Uterus (tissue), 4 donors: ENCODE measurements at regions of chr9 and their contacts with region 1.

Region 1: GRCh38 chr9:113401027-113401792 is at the start of gene ALAD:
- DNase-seq: peak; percentile 99 to 100
- H3K4me3 ChIP-seq: peak within 1 kb of the TSS; percentile 85 to 88
- H3K27ac ChIP-seq: peak within 1 kb of the TSS; percentile 76
- H3K4me1 ChIP-seq: peaks cover 5 to 6% of the 10 kb centered on the region in 2 donors
- H3K27me3 ChIP-seq: no peaks in the 10 kb centered on the region
- CTCF ChIP-seq: peak; percentile 96 to 98 (median 96)
- POLR2A ChIP-seq: peak in 1 of 2 donors; percentile 60
- total RNA-seq, gene ALAD: 1.5 to 26.6 (median 16.1) TPM

Region 2: DNA sequence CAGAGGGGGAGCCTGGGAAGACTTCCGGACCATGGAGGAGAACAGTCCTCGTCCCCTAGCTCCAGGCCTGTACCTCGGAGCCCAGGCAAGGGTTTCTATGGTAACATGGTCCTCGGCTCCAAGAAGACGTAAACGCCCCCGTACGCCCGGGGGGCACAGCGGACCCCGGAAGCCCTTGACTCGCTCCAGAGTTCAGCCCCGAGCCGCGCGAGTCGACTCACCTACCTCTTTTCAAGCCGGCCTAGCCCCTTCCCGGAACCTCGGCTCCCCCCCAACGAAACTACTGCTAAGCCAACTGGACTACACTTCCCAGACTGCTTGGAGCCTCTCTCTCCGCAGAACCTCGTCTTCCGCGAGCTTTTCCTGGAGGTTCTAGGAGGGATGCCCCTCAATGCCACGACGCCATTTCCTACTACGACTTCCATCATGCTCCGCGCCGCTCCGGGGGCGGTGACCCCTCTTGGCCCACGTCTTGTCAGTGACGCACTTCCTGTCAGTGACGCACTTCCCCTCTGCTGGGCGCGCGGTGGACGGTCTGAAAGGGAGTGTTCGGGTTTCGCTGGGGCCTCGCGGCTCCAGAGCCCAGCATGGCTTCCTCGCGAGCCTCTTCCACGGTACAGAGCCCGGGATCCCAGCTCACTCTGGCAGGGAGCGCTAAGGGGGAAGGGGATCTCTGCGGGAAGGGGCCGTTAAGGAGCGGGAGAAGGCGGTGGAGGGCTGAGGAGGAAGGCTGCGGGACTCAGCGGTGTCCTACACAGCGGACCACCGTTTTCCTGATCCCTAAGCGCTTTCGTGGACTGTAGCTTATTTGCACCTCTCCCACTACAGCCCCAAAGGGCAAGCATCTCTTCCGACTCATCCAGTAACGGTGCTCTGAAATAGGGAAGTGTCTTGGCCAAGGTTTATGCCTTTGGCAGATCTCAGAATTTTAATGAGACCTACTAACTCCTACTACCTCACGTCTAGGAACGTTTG is 125.8 kb before region 1 on chr9 and contains the starts of genes CDC26 and PRPF4:
- intact Hi-C with region 1: loop called (anchors 10 kb)
- DNase-seq: peak; percentile 96 to 97
- H3K4me3 ChIP-seq: peak within 1 kb of the TSS; percentile 82 to 86
- H3K27ac ChIP-seq: peak within 1 kb of the TSS; percentile 95 to 97
- H3K4me1 ChIP-seq: peaks cover 0 to 4% of the 10 kb centered on the region in 2 donors
- H3K27me3 ChIP-seq: no peaks in the 10 kb centered on the region
- CTCF ChIP-seq: peak in 3 of 4 experiments; percentile 8 to 35 (median 23)
- POLR2A ChIP-seq: peak; percentile 77 to 96
- total RNA-seq, gene CDC26: 16.9 to 30.9 (median 26.3) TPM
- total RNA-seq, gene PRPF4: 5.9 to 30.2 (median 18.4) TPM

Region 3: DNA sequence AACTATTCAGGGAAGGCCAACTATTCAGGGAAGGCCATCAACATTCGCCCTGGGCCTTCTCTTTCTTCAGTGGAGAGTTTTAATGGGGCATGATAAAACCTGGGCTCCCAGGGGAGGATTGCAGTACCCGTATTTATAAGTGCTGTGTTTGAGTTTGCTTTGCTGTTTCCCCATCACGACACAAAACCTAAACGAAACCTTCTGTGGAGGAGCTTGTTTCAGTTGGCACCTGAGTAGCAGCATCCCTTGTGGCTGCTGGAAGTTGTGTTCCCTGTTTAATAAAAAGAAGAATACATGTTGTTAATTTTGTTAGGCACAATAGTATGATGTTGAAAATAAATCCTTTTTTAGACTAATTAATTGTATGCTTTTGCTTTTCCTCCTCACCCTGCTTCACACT is 69.4 kb before region 1 on chr9:
- intact Hi-C with region 1: loop called (anchors 10 kb)
- DNase-seq: no peak
- H3K4me3 ChIP-seq: no peak overlapping the region
- H3K27ac ChIP-seq: no peak overlapping the region
- H3K4me1 ChIP-seq: no peaks in the 10 kb centered on the region
- H3K27me3 ChIP-seq: no peaks in the 10 kb centered on the region
- CTCF ChIP-seq: no peak
- POLR2A ChIP-seq: no peak